PC-3 (cell line): ENCODE measurements at regions of chr6 and their contacts with region 1.

Region 1: DNA sequence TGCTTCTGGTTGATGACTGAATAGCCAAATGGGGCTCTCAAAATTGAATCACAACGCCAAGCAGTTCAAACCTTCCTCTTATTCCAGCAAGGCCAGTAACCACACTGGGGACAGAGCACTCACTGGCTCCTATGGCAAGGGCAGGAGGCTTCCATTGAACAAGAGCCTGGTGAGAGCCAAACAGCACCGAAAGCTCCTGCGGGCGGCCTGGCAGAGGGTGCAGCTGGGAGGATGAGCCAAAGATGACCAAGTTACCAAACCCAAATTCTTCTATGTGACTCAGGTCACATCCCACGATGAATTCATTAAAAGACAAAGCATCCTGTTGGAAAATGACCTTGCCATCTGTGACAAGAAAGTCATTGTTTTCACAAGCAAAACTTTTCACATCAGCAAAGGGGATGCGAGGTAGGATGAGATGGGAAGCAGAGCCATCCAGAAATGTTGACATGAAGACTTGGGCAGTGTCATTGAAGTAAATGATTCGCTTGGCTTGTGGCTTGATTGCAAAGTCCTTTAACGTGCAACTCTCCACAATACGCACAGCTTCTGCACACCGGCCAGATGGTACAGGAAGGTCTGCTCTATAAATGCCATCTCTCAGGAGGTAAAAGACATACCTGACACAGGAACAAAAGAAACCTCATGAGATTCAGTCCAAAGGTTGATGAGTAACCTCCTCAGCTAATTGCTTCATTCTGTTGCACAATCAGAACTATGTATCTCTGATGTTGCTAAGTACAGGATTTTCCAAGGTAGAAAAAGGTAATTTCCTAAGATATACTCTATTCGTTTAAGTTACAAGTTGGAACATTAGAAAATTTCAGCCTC is 36.3 kb downstream of the ROS1 start:
- DNase-seq: peak; percentile 89
- ATAC-seq: peak; percentile 68
- H3K4me3 ChIP-seq: peak overlapping the region; percentile 31; the same call in 1 of the 2 replicates
- H3K27ac ChIP-seq: peak overlapping the region; percentile 90
- H3K4me1 ChIP-seq: peaks cover 58% of the 10 kb centered on the region
- H3K27me3 ChIP-seq: no peaks in the 10 kb centered on the region
- CTCF ChIP-seq: no peak

Region 2: DNA sequence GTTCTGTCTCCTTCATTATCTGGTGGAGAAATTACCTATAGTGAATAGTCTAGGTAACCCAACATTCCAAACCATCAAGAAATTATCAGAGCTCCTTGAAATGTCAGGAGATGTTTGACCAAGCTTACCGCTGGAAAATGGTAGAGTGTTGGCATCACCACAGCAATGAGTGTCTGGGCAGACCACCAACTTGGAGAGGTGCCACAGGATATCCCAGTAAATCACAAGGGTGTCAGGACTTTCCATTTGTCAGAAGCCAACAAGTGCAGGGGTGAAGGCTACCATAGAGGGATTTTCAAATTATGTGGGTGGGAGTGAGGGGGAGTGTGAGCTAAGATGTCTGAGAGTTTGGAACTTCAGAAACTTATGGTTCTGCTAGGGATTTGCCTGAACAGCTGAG is 50.9 kb before region 1 on chr6:
- CTCF ChIA-PET with region 1: no interaction called
- POLR2A ChIA-PET with region 1: no interaction called
- intact Hi-C with region 1: no loop called
- DNase-seq: no peak
- ATAC-seq: no peak
- H3K4me3 ChIP-seq: no peak overlapping the region
- H3K27ac ChIP-seq: no peak overlapping the region
- H3K4me1 ChIP-seq: no peaks in the 10 kb centered on the region
- H3K27me3 ChIP-seq: no peaks in the 10 kb centered on the region
- CTCF ChIP-seq: no peak

Region 3: GRCh38 chr6:117352466-117353081 is 36.9 kb before region 1 on chr6:
- CTCF ChIA-PET with region 1: no interaction called
- POLR2A ChIA-PET with region 1: no interaction called
- intact Hi-C with region 1: loop called (anchors 1 kb)
- DNase-seq: peak; percentile 68
- ATAC-seq: peak; percentile 67
- H3K4me3 ChIP-seq: no peak overlapping the region
- H3K27ac ChIP-seq: no peak overlapping the region
- H3K4me1 ChIP-seq: peaks cover 4% of the 10 kb centered on the region
- H3K27me3 ChIP-seq: no peaks in the 10 kb centered on the region
- CTCF ChIP-seq: peak; percentile 64

Region 4: DNA sequence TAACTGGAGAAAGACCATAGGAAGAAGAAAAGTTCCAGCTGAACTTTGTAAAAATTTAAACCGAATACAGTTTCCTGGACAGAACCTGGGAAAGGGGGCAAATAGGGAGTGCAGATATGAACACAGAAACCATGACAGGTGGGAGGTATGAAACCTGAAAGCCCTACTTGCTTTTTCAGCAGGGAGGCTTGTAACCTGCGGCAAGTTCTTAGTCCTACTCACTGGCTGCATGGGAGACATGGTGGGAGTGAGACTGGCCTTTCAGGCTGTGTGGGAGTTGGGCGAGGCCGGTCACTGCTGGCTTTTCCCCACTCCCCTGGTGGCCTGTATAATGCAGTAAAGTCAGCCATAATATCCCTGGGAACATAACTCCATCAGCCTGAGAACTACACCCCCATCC is 17.9 kb before region 1 on chr6:
- CTCF ChIA-PET with region 1: no interaction called
- POLR2A ChIA-PET with region 1: no interaction called
- intact Hi-C with region 1: loop called (anchors 1 kb)
- DNase-seq: no peak
- ATAC-seq: no peak
- H3K4me3 ChIP-seq: no peak overlapping the region
- H3K27ac ChIP-seq: no peak overlapping the region
- H3K4me1 ChIP-seq: no peaks in the 10 kb centered on the region
- H3K27me3 ChIP-seq: no peaks in the 10 kb centered on the region
- CTCF ChIP-seq: no peak

Region 5: GRCh38 chr6:117399924-117400323 is 10.5 kb after region 1 on chr6:
- CTCF ChIA-PET with region 1: no interaction called
- POLR2A ChIA-PET with region 1: interaction called, 11 read pairs
- intact Hi-C with region 1: no loop called
- DNase-seq: peak; percentile 41
- ATAC-seq: peak; percentile 51; the same call in 1 of the 2 replicates
- H3K4me3 ChIP-seq: no peak overlapping the region
- H3K27ac ChIP-seq: no peak overlapping the region
- H3K4me1 ChIP-seq: peaks cover 6% of the 10 kb centered on the region; the same call in 1 of the 2 replicates
- H3K27me3 ChIP-seq: no peaks in the 10 kb centered on the region
- CTCF ChIP-seq: peak; percentile 53

Region 6: DNA sequence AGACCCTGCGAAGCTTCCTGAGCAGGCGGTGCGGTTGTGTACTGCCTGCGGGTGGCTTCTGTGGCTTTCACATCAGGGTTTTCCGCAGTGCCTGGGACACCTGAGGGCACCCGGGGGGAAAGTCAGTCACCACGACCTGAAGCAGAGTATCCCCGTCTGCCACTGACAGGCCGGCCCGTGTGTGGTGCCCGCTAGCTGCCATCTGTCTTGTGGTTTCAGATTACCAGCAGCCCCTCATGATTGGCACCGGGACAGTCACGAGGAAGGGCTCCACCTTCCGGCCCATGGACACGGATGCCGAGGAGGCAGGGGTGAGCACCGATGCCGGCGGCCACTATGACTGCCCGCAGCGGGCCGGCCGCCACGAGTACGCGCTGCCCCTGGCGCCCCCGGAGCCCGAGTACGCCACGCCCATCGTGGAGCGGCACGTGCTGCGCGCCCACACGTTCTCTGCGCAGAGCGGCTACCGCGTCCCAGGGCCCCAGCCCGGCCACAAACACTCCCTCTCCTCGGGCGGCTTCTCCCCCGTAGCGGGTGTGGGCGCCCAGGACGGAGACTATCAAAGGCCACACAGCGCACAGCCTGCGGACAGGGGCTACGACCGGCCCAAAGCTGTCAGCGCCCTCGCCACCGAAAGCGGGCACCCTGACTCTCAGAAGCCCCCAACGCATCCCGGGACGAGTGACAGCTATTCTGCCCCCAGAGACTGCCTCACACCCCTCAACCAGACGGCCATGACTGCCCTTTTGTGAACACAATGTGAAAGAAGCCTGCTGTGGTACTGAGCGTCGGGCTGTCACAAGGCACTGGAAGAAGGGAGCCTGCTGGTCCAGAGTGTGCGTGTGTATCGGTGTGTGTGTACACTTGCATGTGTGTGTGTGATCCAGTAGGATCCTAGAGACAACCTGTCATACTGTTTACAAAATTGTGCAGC is 158.5 kb after region 1 on chr6:
- CTCF ChIA-PET with region 1: no interaction called
- POLR2A ChIA-PET with region 1: no interaction called
- intact Hi-C with region 1: loop called (anchors 5 kb)
- DNase-seq: no peak
- ATAC-seq: no peak; the same call in 1 of the 2 replicates
- H3K4me3 ChIP-seq: no peak overlapping the region
- H3K27ac ChIP-seq: 0 out of 2 replicates have a peak overlapping the region, but pooled peaks have one; percentile 8
- H3K4me1 ChIP-seq: peaks cover 47% of the 10 kb centered on the region
- H3K27me3 ChIP-seq: no peaks in the 10 kb centered on the region
- CTCF ChIP-seq: no peak